Vagina (tissue), 2 donors: ENCODE measurements at regions of chr6 and their contacts with region 1.

Region 1: GRCh38 chr6:154410619-154411072 is 54.0 kb upstream of the IPCEF1 start:
- DNase-seq: no peak
- H3K4me3 ChIP-seq: no peak overlapping the region
- H3K27ac ChIP-seq: peak overlapping the region; percentile 85
- H3K4me1 ChIP-seq: peaks cover 23% of the 10 kb centered on the region
- H3K27me3 ChIP-seq: no peaks in the 10 kb centered on the region
- CTCF ChIP-seq: no peak
- POLR2A ChIP-seq: no peak

Region 2: DNA sequence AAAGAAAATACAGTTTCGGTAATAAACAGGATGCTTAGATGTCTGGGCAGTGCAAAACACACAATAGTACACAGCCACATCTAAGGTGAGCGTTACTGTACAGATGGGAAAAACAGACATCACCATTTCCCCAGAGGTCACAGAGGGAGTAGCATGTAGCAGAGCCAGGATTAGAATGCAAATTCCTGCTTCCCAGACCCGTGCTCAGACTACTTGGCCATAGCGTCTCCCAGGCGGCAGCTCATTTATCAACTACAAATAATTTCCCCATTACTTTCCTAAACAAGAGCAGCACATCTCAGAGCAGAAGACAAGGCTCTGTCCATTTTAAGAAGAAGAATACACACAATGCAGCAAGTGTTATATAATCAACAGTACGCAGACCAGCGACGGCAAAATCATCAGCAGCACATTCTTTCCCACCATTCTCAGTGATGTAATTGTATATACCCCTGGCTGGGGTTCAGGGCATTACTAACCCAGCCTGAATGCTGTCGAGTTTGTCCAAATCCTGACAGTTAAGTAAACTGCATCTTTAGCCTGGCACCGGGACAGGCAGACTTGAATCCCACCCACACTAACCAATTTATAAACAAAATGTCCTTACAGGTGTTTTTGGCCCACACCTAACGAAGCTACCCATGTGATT is 37.9 kb after region 1 on chr6:
- intact Hi-C with region 1: loop called (anchors 1 kb)
- DNase-seq: no peak
- H3K4me3 ChIP-seq: peak overlapping the region in 1 of 2 donors; percentile 6
- H3K27ac ChIP-seq: peak overlapping the region; percentile 36
- H3K4me1 ChIP-seq: peaks cover 17% of the 10 kb centered on the region
- H3K27me3 ChIP-seq: no peaks in the 10 kb centered on the region
- CTCF ChIP-seq: peak in 1 of 3 experiments; percentile 19
- POLR2A ChIP-seq: no peak

Region 3: GRCh38 chr6:154510143-154510905 is 99.7 kb after region 1 on chr6 and contains the start of gene CNKSR3:
- intact Hi-C with region 1: loop called (anchors 10 kb)
- DNase-seq: no peak
- H3K4me3 ChIP-seq: peak within 1 kb of the TSS; percentile 64 to 73
- H3K27ac ChIP-seq: peak within 1 kb of the TSS; percentile 80
- H3K4me1 ChIP-seq: peaks cover 31% of the 10 kb centered on the region
- H3K27me3 ChIP-seq: no peaks in the 10 kb centered on the region
- CTCF ChIP-seq: peak in 1 of 3 experiments; percentile 19
- POLR2A ChIP-seq: peak in 1 of 2 donors; percentile 73
- total RNA-seq, gene CNKSR3: 7.4 TPM

Region 4: DNA sequence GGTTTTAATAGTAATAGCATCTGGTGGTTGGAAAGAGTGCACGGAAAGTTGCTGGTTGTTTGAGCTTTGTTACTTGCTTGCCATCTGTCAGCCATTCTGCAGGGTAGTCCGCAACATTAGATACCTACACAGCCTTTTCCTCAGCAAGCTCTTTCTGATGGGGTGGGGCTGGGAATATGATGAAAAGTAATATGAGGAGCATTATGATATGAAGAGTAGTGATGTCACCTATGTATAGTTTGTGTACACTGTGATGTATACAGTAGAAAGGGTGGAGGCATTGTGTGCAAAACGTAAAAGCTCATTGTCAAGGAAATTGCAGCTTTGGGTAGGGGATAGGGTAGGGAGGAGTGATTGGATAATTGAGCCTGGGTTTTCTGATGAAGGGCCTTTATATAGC is 338.7 kb after region 1 on chr6:
- intact Hi-C with region 1: no loop called
- DNase-seq: no peak
- H3K4me3 ChIP-seq: no peak overlapping the region
- H3K27ac ChIP-seq: no peak overlapping the region
- H3K4me1 ChIP-seq: peaks cover 69% of the 10 kb centered on the region
- H3K27me3 ChIP-seq: no peaks in the 10 kb centered on the region
- CTCF ChIP-seq: no peak
- POLR2A ChIP-seq: no peak